RWPE1 (cell line): ENCODE measurements at regions of chr16 and their contacts with region 1.

Region 1: DNA sequence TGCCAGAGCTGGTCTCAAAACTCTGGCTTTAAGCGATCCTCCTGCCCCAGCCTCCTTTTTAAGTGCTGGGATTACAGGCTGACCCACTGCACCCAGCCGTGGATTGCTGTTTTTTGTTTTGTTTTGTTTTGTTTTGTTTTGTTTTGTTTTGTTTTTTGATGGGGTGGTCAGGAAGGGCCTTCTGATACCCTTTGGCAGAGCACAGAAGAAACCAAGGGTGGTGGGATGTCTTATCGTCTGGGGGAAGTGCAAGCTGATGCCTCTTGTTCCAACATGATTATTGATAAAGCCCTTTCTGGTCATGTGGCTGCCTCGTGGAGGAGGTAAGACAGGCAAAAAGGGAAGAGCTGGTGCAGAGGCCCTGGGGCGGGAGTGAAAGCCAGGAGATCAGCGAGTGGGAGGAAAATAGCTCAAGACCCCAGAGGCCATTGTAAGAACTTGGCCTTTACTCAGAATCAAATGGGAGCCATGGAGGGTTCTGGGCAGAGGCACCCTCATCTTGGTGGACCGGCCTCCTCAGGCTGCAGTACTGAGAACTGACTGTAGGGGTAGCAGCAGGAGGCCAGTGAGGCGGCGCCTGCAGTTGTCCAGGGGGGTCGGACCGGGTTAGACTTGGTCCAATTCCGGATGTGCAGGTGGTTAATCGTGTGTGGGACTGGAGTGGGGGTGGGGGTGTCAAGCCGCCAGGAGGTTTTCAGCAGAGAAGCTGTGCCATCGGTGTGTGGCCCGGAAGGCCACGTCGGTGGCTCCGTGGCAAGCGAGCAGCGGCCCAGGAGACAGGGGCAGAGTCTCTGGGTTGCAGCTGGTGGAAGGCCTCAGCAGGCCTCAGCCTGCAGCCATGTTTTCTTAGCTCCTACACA is 84.4 kb upstream of the GSE1 start:
- DNase-seq: no peak
- H3K27ac ChIP-seq: peak overlapping the region; percentile 16; the same call in 1 of the 2 replicates
- CTCF ChIP-seq: peak; percentile 53

Region 2: GRCh38 chr16:85541980-85542900 is 13.5 kb after region 1 on chr16:
- CTCF ChIA-PET with region 1: interaction called, 18 read pairs
- POLR2A ChIA-PET with region 1: no interaction called
- DNase-seq: no peak
- H3K27ac ChIP-seq: no peak overlapping the region
- CTCF ChIP-seq: no peak